Brain microvascular endothelial cell (primary cell): ENCODE measurements at regions of chr10 and their contacts with region 1.

Region 1: GRCh38 chr10:59362144-59362958 is at the start of gene FAM13C:
- DNase-seq: peak; percentile 46
- H3K4me3 ChIP-seq: peak within 1 kb of the TSS; percentile 62
- H3K27ac ChIP-seq: peak within 1 kb of the TSS; percentile 4
- H3K27me3 ChIP-seq: no peaks in the 10 kb centered on the region
- CTCF ChIP-seq: no peak

Region 2: DNA sequence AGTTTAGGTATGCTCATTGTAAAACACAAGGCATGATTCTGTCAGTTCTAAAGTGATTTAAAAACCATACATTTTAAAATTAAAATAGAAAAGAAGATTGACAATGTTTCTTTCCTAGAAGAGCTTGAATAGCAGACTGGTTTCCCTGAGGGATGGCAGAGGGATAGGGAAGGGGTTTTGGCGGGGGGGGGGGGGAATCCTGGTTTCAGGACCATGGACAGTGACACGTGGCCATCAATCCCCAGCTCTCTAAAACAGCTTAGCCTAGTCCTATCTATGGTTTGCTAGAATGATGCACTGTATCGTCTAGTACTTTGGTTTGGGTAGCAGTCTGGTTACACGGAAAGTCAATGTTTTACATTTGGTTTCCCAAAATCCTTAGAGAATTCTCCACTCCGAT is 97.2 kb before region 1 on chr10:
- in situ Hi-C with region 1: loop called (anchors 25 kb)
- DNase-seq: no peak
- H3K4me3 ChIP-seq: no peak overlapping the region
- H3K27ac ChIP-seq: no peak overlapping the region
- H3K27me3 ChIP-seq: no peaks in the 10 kb centered on the region
- CTCF ChIP-seq: no peak